HepG2 (cell line): ENCODE measurements at regions of chr2 and their contacts with region 1.

Region 1: GRCh38 chr2:207933396-207934065 is 91.8 kb downstream of the PLEKHM3 start:
- DNase-seq: no peak
- ATAC-seq: no peak
- H3K4me3 ChIP-seq: no peak overlapping the region
- H3K27ac ChIP-seq: peak overlapping the region; percentile 9
- H3K4me1 ChIP-seq: peaks cover 63% of the 10 kb centered on the region
- H3K27me3 ChIP-seq: no peaks in the 10 kb centered on the region
- CTCF ChIP-seq: no peak
- EP300 ChIP-seq: no peak
- POLR2A ChIP-seq: no peak
- RAD21 ChIP-seq: no peak

Region 2: GRCh38 chr2:207091176-207091575 is 842.4 kb before region 1 on chr2:
- CTCF ChIA-PET with region 1: no interaction called
- POLR2A ChIA-PET with region 1: no interaction called
- in situ Hi-C with region 1: no loop called
- intact Hi-C with region 1: no loop called
- DNase-seq: no peak
- ATAC-seq: no peak
- H3K4me3 ChIP-seq: no peak overlapping the region
- H3K27ac ChIP-seq: no peak overlapping the region
- H3K4me1 ChIP-seq: no peaks in the 10 kb centered on the region
- H3K27me3 ChIP-seq: no peaks in the 10 kb centered on the region
- CTCF ChIP-seq: no peak
- EP300 ChIP-seq: no peak
- POLR2A ChIP-seq: no peak
- RAD21 ChIP-seq: no peak

Region 3: DNA sequence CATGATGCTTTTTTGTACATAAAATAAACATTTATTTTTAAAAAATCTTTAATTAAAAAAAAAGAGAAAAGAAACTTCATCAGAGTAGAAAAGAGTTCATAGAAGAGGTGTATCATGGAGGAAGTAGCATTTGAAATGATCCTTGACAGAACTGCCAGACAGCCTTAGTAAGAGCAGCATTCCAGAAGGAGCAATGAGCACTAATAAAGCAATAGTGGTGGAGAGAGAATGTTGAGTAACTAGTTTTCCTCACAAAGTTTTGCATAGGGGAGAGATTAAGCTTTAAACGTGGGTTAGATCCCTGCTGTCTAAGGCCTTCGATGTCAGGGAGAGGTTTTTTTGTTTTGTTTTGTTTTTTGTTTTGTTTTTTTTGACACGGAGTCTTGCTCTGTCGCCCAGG is 278.5 kb before region 1 on chr2:
- CTCF ChIA-PET with region 1: no interaction called
- POLR2A ChIA-PET with region 1: no interaction called
- in situ Hi-C with region 1: no loop called
- intact Hi-C with region 1: no loop called
- DNase-seq: no peak
- ATAC-seq: no peak
- H3K4me3 ChIP-seq: no peak overlapping the region
- H3K27ac ChIP-seq: no peak overlapping the region
- H3K4me1 ChIP-seq: no peaks in the 10 kb centered on the region
- H3K27me3 ChIP-seq: no peaks in the 10 kb centered on the region
- CTCF ChIP-seq: no peak
- EP300 ChIP-seq: no peak
- POLR2A ChIP-seq: no peak
- RAD21 ChIP-seq: no peak

Region 4: GRCh38 chr2:207813221-207813916 is 120.2 kb before region 1 on chr2:
- CTCF ChIA-PET with region 1: no interaction called
- POLR2A ChIA-PET with region 1: interaction called, 10 read pairs
- in situ Hi-C with region 1: no loop called
- intact Hi-C with region 1: no loop called
- DNase-seq: no peak
- ATAC-seq: 0 out of 3 replicates have a peak, but pooled peaks have one; percentile 6
- H3K4me3 ChIP-seq: no peak overlapping the region
- H3K27ac ChIP-seq: no peak overlapping the region
- H3K4me1 ChIP-seq: peaks cover 88% of the 10 kb centered on the region
- H3K27me3 ChIP-seq: no peaks in the 10 kb centered on the region
- CTCF ChIP-seq: no peak; the same call in 1 of the 2 replicates
- EP300 ChIP-seq: no peak
- POLR2A ChIP-seq: no peak
- RAD21 ChIP-seq: 0 out of 2 replicates have a peak, but pooled peaks have one; percentile 12

Region 5: DNA sequence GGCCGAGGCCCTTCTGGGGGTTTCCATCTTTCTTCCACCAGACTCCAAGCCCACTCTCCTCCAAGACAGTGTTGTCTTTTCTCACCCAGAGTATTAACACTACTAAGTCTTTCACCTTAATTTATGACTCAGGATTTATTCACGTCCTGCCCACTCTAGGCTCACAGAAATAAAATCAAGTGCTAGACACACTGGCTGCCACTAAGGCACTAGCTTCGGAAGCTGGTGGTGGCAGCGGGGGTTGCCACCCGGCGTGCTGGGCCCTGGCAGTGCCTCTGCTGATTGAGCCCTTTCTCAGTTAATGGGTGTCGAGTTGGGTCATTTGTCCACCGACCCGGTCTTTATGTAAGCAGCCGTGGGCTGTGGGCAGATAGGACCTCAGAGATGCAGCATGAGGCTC is 70.2 kb before region 1 on chr2:
- CTCF ChIA-PET with region 1: no interaction called
- POLR2A ChIA-PET with region 1: no interaction called
- in situ Hi-C with region 1: no loop called
- intact Hi-C with region 1: no loop called
- DNase-seq: no peak
- ATAC-seq: no peak
- H3K4me3 ChIP-seq: no peak overlapping the region
- H3K27ac ChIP-seq: no peak overlapping the region
- H3K4me1 ChIP-seq: peaks cover 24% of the 10 kb centered on the region
- H3K27me3 ChIP-seq: no peaks in the 10 kb centered on the region
- CTCF ChIP-seq: no peak
- EP300 ChIP-seq: no peak
- POLR2A ChIP-seq: no peak
- RAD21 ChIP-seq: no peak

Region 6: DNA sequence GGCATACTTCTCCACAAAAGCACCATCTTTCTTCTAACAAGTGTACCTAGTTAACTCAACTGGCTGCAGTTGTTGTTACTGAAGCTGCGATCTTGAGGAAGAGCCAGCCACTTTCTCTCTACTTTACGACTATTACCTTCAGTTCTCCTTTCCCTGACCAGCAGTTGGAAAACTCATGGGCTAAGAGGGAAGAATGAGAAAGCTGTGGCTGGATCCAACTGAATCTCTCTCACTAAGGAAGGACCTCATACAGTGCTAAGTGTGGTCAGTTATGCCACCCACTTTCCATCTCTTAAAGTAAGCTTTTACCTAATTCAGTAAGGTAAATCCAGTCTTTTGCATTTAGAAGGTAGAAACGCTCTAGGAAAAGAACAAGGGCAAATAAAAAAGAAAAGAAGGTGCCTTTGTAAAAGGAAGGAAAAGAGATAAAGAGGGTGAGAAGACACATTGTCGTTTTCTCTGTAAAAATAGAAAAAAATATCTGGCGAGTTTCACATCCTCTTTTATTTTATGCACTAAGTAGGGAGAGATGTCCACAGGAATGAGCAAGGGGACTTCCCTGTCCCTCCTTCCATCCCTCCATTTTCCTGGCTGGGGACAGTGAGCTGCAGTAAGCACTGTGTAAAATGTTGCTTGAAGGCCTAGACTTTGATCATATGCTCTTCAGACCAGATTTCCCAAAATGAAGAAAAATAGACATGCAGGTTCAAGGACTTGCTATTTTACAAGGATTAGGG is 18.4 kb after region 1 on chr2:
- CTCF ChIA-PET with region 1: no interaction called
- POLR2A ChIA-PET with region 1: interaction called, 12 read pairs
- in situ Hi-C with region 1: no loop called
- intact Hi-C with region 1: no loop called
- DNase-seq: no peak
- ATAC-seq: no peak
- H3K4me3 ChIP-seq: no peak overlapping the region
- H3K27ac ChIP-seq: no peak overlapping the region
- H3K4me1 ChIP-seq: peaks cover 44% of the 10 kb centered on the region
- H3K27me3 ChIP-seq: no peaks in the 10 kb centered on the region
- CTCF ChIP-seq: no peak
- EP300 ChIP-seq: no peak
- POLR2A ChIP-seq: no peak
- RAD21 ChIP-seq: no peak

Region 7: DNA sequence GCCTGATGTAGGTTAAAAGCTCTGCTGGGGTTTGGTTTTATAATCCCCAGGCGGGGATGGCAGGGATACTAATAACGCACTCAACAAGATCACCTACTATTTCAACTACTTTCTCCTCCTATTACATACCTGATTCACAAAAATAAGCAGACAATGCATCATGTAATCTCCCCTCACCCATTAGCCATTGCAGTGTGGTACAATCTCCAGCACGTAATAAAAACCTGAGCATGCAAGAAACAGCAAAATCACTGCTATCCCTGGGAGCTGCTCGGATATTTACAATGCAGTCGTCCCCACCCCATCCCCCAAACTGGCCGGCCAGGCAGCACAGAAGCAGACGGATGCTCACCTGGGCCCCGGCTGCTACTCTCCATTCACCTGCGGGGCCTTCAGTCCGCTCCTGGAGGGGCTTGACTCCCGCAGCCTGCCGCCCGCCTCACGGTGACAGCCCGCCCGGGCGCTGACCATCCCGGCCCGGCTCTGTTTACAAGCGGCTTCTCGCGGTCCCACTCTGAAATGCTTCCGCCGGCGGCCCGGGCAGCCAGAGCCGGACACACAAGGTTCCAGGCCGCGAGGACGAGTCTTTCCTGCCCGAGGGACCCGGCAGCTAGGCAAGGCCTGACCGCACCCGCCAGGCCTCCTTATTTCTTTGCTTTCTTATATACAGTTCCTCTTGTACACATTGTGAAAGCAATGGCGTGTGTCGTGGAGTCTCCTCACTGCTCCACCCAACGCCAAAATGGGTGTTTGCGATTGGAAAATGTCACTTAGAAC is 91.7 kb after region 1 on chr2 and contains the start of gene PLEKHM3:
- CTCF ChIA-PET with region 1: no interaction called
- POLR2A ChIA-PET with region 1: interaction called, 10 read pairs
- in situ Hi-C with region 1: no loop called
- intact Hi-C with region 1: no loop called
- DNase-seq: peak; percentile 75
- ATAC-seq: peak; percentile 98
- H3K4me3 ChIP-seq: peak within 1 kb of the TSS; percentile 86 to 93 (median 87)
- H3K27ac ChIP-seq: peak within 1 kb of the TSS; percentile 72
- H3K4me1 ChIP-seq: peaks cover 21% of the 10 kb centered on the region
- H3K27me3 ChIP-seq: no peaks in the 10 kb centered on the region; a peak in 1 of 5 replicates
- CTCF ChIP-seq: peak; percentile 45
- EP300 ChIP-seq: peak; percentile 50 to 66; a peak in 3 of 4 replicates
- POLR2A ChIP-seq: peak; percentile 80 to 90
- RAD21 ChIP-seq: peak; percentile 77
- total RNA-seq, gene PLEKHM3: 4.5 and 5.3 TPM in 2 replicates

Region 8: DNA sequence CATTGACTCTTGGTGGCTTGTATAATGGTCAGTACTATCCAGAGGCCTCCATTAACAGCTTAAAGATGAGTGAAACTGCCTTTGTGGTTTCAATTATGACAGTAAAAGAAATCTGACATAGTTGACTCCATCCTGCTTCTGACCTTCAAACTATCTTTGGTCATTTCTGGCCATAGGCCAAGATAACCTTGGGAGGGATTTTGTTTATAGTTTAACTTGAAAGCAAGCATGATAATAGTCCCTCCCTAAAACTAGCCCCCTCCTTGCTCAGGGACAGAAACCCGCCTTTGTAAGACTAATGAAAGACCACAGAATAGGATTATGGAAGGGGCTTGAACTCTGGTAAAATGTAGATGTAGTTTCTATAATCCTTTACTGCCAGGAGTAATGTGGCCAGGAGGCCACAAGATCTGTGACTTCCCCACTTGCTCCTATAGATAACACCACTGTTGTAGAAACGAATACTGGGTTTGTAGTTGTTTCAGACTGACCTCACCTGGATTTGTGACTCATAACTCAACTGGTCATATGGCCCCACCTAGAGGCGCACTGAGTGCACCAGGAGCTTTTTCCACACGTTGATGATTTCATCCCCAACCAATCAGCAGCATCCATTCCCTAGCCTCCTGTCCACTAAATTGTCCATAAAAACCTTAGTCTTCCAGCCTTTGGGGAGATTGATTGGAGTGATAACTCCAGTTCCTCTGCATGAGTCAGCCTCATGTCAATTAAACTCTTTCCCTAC is 100.4 kb after region 1 on chr2:
- CTCF ChIA-PET with region 1: no interaction called
- POLR2A ChIA-PET with region 1: interaction called, 11 read pairs
- in situ Hi-C with region 1: no loop called
- intact Hi-C with region 1: loop called (anchors 2 kb)
- DNase-seq: peak; percentile 97
- ATAC-seq: peak; percentile 90
- H3K4me3 ChIP-seq: peak overlapping the region; percentile 4 to 16 (median 14); a peak in 2 of 6 replicates
- H3K27ac ChIP-seq: peak overlapping the region; percentile 70
- H3K4me1 ChIP-seq: peaks cover 70% of the 10 kb centered on the region
- H3K27me3 ChIP-seq: no peaks in the 10 kb centered on the region
- CTCF ChIP-seq: peak; percentile 98
- EP300 ChIP-seq: peak; percentile 53 to 55; a peak in 3 of 4 replicates
- POLR2A ChIP-seq: no peak
- RAD21 ChIP-seq: peak; percentile 91

Region 9: DNA sequence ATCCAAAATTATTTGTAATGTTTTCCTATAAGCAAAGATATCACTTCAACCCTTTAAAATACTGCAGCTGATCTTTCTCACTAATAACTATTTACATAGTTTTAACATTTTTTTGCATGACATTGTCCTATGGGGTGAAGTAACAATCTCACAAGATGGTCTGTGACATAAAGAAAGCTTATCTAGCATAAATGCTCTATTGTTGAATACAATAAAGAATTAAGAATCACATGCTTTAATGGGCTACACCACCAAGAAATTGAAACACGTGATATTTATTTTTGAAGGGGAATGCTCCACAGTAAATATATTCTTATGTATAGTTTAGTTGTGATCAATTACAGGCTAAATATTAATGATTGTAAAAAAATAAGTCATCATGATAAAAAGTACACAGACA is 914.1 kb after region 1 on chr2:
- CTCF ChIA-PET with region 1: no interaction called
- POLR2A ChIA-PET with region 1: no interaction called
- in situ Hi-C with region 1: no loop called
- intact Hi-C with region 1: no loop called
- DNase-seq: no peak
- ATAC-seq: no peak
- H3K4me3 ChIP-seq: no peak overlapping the region
- H3K27ac ChIP-seq: no peak overlapping the region
- H3K4me1 ChIP-seq: no peaks in the 10 kb centered on the region
- H3K27me3 ChIP-seq: no peaks in the 10 kb centered on the region
- CTCF ChIP-seq: no peak
- EP300 ChIP-seq: no peak
- POLR2A ChIP-seq: no peak
- RAD21 ChIP-seq: no peak